ENCODE measurements at regions of chr6 and their contacts with region 1.

Region 1: GRCh38 chr6:138692058-138692977 is 81.3 kb upstream of the CCDC28A start:
- DNase-seq: no peak
- ATAC-seq: peak; percentile 58
- H3K4me3 ChIP-seq: peak overlapping the region; percentile 72 to 83
- H3K27ac ChIP-seq: peak overlapping the region; percentile 88
- H3K4me1 ChIP-seq: peaks cover 14 to 25% of the 10 kb centered on the region in 2 experiments
- H3K27me3 ChIP-seq: no peaks in the 10 kb centered on the region
- CTCF ChIP-seq: peak; percentile 38 to 79 (median 77); a peak in 4 of 6 replicates
- POLR2A ChIP-seq: no peak
- RAD21 ChIP-seq: peak; percentile 33; the same call in 1 of the 2 replicates

Region 2: DNA sequence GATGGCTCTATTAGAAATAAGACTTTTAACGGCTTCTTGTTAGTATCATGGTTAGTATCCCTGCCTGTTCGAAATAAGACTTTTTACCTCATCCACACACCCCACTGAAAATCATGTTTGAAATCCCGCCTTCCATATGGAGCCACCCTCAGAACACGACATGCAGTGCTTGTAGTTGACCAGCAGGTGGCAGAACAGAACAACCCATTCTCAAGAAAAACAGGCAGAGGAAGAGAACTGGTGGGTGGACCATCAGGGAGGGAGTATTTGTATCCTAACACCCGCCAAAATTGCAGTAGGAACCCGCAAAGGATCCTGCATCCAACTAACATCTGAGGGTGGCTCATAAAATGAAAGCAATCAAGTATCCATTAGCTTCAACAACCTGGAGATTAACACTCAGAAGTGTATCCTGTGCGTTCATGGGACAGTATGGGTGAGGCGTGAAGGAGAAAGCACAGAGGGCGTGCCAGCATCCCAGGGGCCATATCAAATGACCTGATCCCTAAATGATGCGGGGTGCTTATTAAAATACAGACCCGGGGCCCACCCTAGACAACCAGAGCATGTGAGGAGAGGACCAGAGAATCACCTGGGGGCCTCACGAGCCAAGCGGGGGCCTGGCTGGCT is 103.4 kb before region 1 on chr6:
- CTCF ChIA-PET with region 1: no interaction called
- POLR2A ChIA-PET with region 1: no interaction called
- RAD21 ChIA-PET with region 1: no interaction called
- intact Hi-C with region 1: loop called (anchors 5 kb)
- DNase-seq: peak; percentile 67
- ATAC-seq: peak; percentile 64
- H3K4me3 ChIP-seq: no peak overlapping the region
- H3K27ac ChIP-seq: no peak overlapping the region
- H3K4me1 ChIP-seq: peaks cover 6 to 25% of the 10 kb centered on the region in 2 experiments; a peak in 3 of 4 replicates
- H3K27me3 ChIP-seq: no peaks in the 10 kb centered on the region
- CTCF ChIP-seq: peak; percentile 76 to 94 (median 88); a peak in 5 of 6 replicates
- POLR2A ChIP-seq: no peak
- RAD21 ChIP-seq: peak; percentile 91

Measured in HCT116 (cell line).